A549 (cell line): ENCODE measurements at regions of chr19 and their contacts with region 1.

Region 1: GRCh38 chr19:55467236-55468053 is 2.9 kb upstream of the C19orf85 start:
- DNase-seq: peak; percentile 48 to 73
- ATAC-seq: peak; percentile 75 to 93
- H3K4me3 ChIP-seq: no peak overlapping the region
- H3K27ac ChIP-seq: peak overlapping the region; percentile 6 to 35; a peak in 3 of 6 replicates
- H3K4me1 ChIP-seq: peaks cover 6% of the 10 kb centered on the region; the same call in 2 of the 3 replicates
- CTCF ChIP-seq: peak; percentile 99
- EP300 ChIP-seq: no peak
- POLR2A ChIP-seq: no peak
- RAD21 ChIP-seq: peak; percentile 57 to 73

Region 2: DNA sequence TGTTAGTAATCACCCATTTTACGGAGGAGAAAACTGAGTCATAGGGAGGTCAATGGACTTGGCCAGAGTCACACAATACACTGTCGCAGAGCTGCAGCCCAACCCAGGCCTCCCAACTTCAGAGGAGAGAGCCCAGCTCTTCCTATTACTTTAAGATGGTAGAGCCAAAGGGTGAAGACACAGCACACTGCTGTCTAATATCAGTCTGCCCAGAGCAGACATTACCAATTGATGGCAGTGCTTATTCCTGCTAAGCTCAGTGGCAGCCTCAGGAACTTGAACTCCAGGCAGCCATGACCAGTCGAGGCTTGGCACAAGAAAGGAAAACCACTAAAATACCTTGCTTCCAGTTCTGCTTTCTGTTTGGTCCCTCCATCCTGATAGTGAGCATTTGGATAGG is 160.7 kb before region 1 on chr19:
- CTCF ChIA-PET with region 1: no interaction called
- POLR2A ChIA-PET with region 1: no interaction called
- DNase-seq: no peak
- ATAC-seq: no peak
- H3K4me3 ChIP-seq: no peak overlapping the region
- H3K27ac ChIP-seq: no peak overlapping the region
- H3K4me1 ChIP-seq: peaks cover 3% of the 10 kb centered on the region; the same call in 1 of the 3 replicates
- CTCF ChIP-seq: no peak
- EP300 ChIP-seq: no peak
- POLR2A ChIP-seq: no peak
- RAD21 ChIP-seq: no peak

Region 3: GRCh38 chr19:55353803-55354697 is 113.4 kb before region 1 on chr19:
- CTCF ChIA-PET with region 1: no interaction called
- POLR2A ChIA-PET with region 1: no interaction called
- DNase-seq: peak; percentile 75 to 90
- ATAC-seq: peak; percentile 75 to 91
- H3K4me3 ChIP-seq: peak overlapping the region; percentile 50
- H3K27ac ChIP-seq: peak overlapping the region; percentile 62 to 84
- H3K4me1 ChIP-seq: peaks cover 12% of the 10 kb centered on the region
- CTCF ChIP-seq: no peak
- EP300 ChIP-seq: no peak
- POLR2A ChIP-seq: no peak
- RAD21 ChIP-seq: no peak

Region 4: DNA sequence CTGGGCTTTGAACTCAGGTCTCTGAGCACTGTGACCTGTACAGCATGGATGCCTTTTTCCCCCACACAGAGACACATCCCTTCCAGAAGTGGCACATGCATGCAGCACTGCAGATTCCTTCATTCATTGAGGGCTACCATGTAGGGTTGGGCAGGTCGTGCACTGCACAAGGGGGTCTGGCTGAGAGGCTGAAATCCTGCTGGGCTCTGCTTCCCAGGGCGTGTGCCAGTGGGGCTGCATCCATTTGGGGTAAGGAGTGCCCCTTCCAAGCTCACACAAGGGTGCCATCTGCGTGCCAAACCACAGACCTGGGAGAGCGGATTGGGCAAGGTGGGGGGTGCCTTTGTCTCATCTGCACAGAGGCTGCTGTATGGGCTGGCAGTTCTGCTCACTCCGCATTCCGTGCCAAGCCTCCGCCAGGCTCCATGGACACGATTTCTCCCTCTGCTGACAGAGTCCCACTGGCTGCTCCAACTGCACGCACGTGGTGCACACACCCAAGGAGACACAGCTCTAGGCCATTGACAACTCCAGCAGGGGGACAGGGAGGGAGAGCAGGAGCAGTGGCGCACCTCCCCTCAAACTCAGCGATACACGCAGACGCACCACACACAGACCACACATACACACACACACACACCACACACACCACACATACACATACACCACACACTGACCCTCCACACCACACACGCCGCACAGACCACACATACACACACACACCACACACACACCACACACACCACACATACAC is 19.8 kb before region 1 on chr19:
- CTCF ChIA-PET with region 1: interaction called, 31 read pairs
- POLR2A ChIA-PET with region 1: no interaction called
- DNase-seq: peak; percentile 88 to 90
- ATAC-seq: peak; percentile 77 to 81
- H3K4me3 ChIP-seq: no peak overlapping the region
- H3K27ac ChIP-seq: no peak overlapping the region
- H3K4me1 ChIP-seq: peaks cover 27% of the 10 kb centered on the region
- CTCF ChIP-seq: no peak
- EP300 ChIP-seq: no peak
- POLR2A ChIP-seq: no peak
- RAD21 ChIP-seq: no peak

Region 5: GRCh38 chr19:55484593-55485438 is 17.4 kb after region 1 on chr19 and contains the start of gene NAT14:
- CTCF ChIA-PET with region 1: interaction called, 194 read pairs
- POLR2A ChIA-PET with region 1: interaction called, 3 read pairs
- DNase-seq: peak; percentile 77 to 94
- ATAC-seq: peak; percentile 33 to 71
- H3K4me3 ChIP-seq: peak within 1 kb of the TSS; percentile 75
- H3K27ac ChIP-seq: peak within 1 kb of the TSS; percentile 89 to 93
- H3K4me1 ChIP-seq: peaks cover 50% of the 10 kb centered on the region
- CTCF ChIP-seq: no peak
- EP300 ChIP-seq: no peak
- POLR2A ChIP-seq: peak; percentile 22
- RAD21 ChIP-seq: no peak
- polyA plus RNA-seq, gene NAT14: 16.8 and 21.0 TPM in 2 replicates

Region 6: GRCh38 chr19:55611983-55612645 is 144.7 kb after region 1 on chr19:
- CTCF ChIA-PET with region 1: interaction called, 58 read pairs
- POLR2A ChIA-PET with region 1: no interaction called
- DNase-seq: no peak
- ATAC-seq: no peak
- H3K4me3 ChIP-seq: no peak overlapping the region
- H3K27ac ChIP-seq: no peak overlapping the region
- H3K4me1 ChIP-seq: peaks cover 2% of the 10 kb centered on the region; the same call in 1 of the 3 replicates
- CTCF ChIP-seq: no peak
- EP300 ChIP-seq: no peak
- POLR2A ChIP-seq: no peak
- RAD21 ChIP-seq: no peak

Region 7: DNA sequence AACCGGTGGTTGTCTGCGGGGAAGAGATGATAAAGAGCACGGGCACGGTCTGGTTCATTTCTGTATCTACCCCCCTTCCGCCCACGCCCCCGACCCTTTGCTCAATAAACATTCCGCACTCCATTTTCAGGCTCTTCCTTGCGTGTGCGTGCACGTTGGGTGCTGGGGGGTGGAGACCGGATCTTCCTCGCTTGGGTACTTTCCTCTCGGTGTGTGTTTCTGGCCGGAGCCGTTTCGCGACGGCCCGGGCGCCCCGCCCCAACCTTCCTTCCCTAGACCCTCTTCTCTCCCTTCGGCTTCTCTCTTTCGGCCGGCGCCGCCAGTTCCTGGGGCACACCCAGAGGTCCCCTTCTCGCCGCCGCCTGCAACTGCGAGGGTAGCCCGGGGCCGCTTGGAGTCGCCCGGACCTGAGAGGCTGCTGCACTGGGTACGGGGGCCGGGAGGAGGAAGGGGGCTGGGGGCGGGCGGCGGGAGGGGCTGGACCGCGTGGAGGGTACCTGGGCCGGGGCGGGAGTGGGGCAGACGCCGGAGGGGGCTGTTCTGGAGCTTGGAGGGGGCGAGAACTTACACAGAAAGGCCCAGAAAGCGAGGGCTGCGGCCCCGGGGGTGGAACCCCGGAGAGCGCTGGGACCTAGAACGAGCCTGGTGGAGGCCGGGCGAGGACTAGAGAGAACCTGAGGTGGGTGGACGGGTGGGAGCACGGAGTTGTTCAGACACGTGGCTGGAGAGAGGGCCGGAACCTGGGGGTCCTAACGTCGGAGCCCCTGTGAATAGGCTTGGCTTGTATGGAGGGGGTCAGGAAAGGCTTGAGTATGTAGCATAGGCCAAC is 176.1 kb after region 1 on chr19 and contains the start of gene ZNF581:
- CTCF ChIA-PET with region 1: interaction called, 17 read pairs
- POLR2A ChIA-PET with region 1: no interaction called
- DNase-seq: peak; percentile 86 to 97
- ATAC-seq: peak; percentile 45 to 65
- H3K4me3 ChIP-seq: peak within 1 kb of the TSS; percentile 63
- H3K27ac ChIP-seq: peak within 1 kb of the TSS; percentile 92 to 97
- H3K4me1 ChIP-seq: peaks cover 38% of the 10 kb centered on the region
- CTCF ChIP-seq: no peak
- EP300 ChIP-seq: no peak
- POLR2A ChIP-seq: peak; percentile 45
- RAD21 ChIP-seq: no peak
- polyA plus RNA-seq, gene ZNF581: 13.9 and 17.1 TPM in 2 replicates

Region 8: GRCh38 chr19:56601375-56601774 is 1133.9 kb after region 1 on chr19:
- CTCF ChIA-PET with region 1: no interaction called
- POLR2A ChIA-PET with region 1: no interaction called
- DNase-seq: no peak
- ATAC-seq: no peak
- H3K4me3 ChIP-seq: no peak overlapping the region
- H3K27ac ChIP-seq: no peak overlapping the region
- H3K4me1 ChIP-seq: no peaks in the 10 kb centered on the region
- CTCF ChIP-seq: no peak
- EP300 ChIP-seq: no peak
- POLR2A ChIP-seq: no peak
- RAD21 ChIP-seq: no peak